HCT116 (cell line): ENCODE measurements at regions of chr5 and their contacts with region 1.

Region 1: DNA sequence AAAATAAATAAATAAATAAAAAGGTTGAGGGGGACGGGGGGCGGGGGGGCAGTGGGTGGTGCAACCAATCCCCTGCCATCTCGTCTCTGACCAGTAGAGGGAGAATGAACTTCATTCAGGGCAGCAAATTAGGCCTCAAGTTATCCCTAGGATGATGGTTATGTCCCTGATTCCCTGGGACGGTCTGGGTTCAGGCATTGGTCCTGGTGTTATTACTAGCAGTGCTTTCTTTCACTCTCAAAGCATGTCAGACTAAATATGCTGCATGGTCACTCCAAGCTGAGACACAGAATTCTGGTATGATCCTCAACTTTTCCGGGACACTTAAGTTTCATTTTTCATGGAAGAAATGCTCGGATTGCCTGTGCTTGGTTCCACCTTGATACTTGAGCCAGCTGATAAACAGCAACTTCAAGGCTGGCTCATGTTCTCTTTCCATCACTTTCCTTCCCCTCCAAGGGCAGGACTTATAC is 59.4 kb downstream of the DAP start:
- DNase-seq: no peak
- ATAC-seq: peak; percentile 35
- H3K4me3 ChIP-seq: peak overlapping the region in 1 of 2 experiments; percentile 24; a peak in 2 of 4 replicates
- H3K27ac ChIP-seq: peak overlapping the region; percentile 70
- H3K4me1 ChIP-seq: peaks cover 54 to 55% of the 10 kb centered on the region in 2 experiments
- H3K27me3 ChIP-seq: no peaks in the 10 kb centered on the region
- CTCF ChIP-seq: peak; percentile 17 to 60 (median 54); a peak in 5 of 6 replicates
- POLR2A ChIP-seq: no peak
- RAD21 ChIP-seq: peak; percentile 44

Region 2: GRCh38 chr5:10467240-10468198 is 234.1 kb before region 1 on chr5:
- CTCF ChIA-PET with region 1: no interaction called
- POLR2A ChIA-PET with region 1: no interaction called
- RAD21 ChIA-PET with region 1: no interaction called
- intact Hi-C with region 1: no loop called
- DNase-seq: no peak
- ATAC-seq: no peak
- H3K4me3 ChIP-seq: no peak overlapping the region
- H3K27ac ChIP-seq: no peak overlapping the region
- H3K4me1 ChIP-seq: peaks cover 0 to 10% of the 10 kb centered on the region in 2 experiments; a peak in 2 of 4 replicates
- H3K27me3 ChIP-seq: no peaks in the 10 kb centered on the region
- CTCF ChIP-seq: no peak
- POLR2A ChIP-seq: no peak
- RAD21 ChIP-seq: no peak

Region 3: GRCh38 chr5:10724799-10725507 is 23.4 kb after region 1 on chr5:
- CTCF ChIA-PET with region 1: interaction called, 37 read pairs
- POLR2A ChIA-PET with region 1: interaction called, 6 read pairs
- RAD21 ChIA-PET with region 1: no interaction called
- intact Hi-C with region 1: no loop called
- DNase-seq: peak; percentile 75
- ATAC-seq: peak; percentile 78
- H3K4me3 ChIP-seq: peak overlapping the region; percentile 23 to 48
- H3K27ac ChIP-seq: peak overlapping the region; percentile 96
- H3K4me1 ChIP-seq: peaks cover 44 to 59% of the 10 kb centered on the region in 2 experiments
- H3K27me3 ChIP-seq: no peaks in the 10 kb centered on the region
- CTCF ChIP-seq: peak; percentile 27 to 82 (median 60); a peak in 5 of 6 replicates
- POLR2A ChIP-seq: no peak
- RAD21 ChIP-seq: peak; percentile 24; the same call in 1 of the 2 replicates

Region 4: GRCh38 chr5:10761166-10761932 is 59.7 kb after region 1 on chr5 and contains the start of gene DAP:
- CTCF ChIA-PET with region 1: no interaction called
- POLR2A ChIA-PET with region 1: no interaction called
- RAD21 ChIA-PET with region 1: no interaction called
- intact Hi-C with region 1: loop called (anchors 5 kb)
- DNase-seq: peak; percentile 51
- ATAC-seq: peak; percentile 91
- H3K4me3 ChIP-seq: peak within 1 kb of the TSS; percentile 54 to 71
- H3K27ac ChIP-seq: peak within 1 kb of the TSS; percentile 86
- H3K4me1 ChIP-seq: peaks cover 7 to 17% of the 10 kb centered on the region in 2 experiments; a peak in 2 of 4 replicates
- H3K27me3 ChIP-seq: no peaks in the 10 kb centered on the region
- CTCF ChIP-seq: no peak
- POLR2A ChIP-seq: no peak
- RAD21 ChIP-seq: no peak
- total RNA-seq, gene DAP: 59.1 TPM

Region 5: DNA sequence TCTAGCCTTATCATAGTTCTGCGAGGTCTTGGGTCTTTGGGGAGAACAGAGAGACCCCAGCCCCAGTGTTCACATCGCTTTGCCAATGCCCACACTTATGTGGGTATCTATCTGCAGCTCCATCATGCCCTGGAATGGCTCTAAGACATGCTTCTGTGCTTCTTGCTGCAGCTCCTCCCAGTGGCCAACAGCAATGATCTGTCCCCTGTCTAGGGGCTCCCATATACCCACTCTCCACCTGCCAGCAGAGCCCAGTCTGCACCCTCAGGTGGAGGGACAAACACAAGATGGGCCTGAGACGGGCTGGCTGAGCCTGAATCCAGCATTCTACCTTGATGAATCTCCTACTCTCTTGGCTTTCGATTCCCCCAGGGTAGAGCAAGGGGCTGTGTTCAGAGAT is 74.0 kb after region 1 on chr5:
- CTCF ChIA-PET with region 1: interaction called, 5 read pairs
- POLR2A ChIA-PET with region 1: no interaction called
- RAD21 ChIA-PET with region 1: no interaction called
- intact Hi-C with region 1: loop called (anchors 5 kb)
- DNase-seq: no peak
- ATAC-seq: peak; percentile 71
- H3K4me3 ChIP-seq: no peak overlapping the region
- H3K27ac ChIP-seq: no peak overlapping the region
- H3K4me1 ChIP-seq: no peaks in the 10 kb centered on the region; a peak in 1 of 4 replicates
- H3K27me3 ChIP-seq: no peaks in the 10 kb centered on the region
- CTCF ChIP-seq: peak; percentile 21 to 34 (median 27); a peak in 4 of 6 replicates
- POLR2A ChIP-seq: no peak
- RAD21 ChIP-seq: peak; percentile 34